ENCODE measurements at regions of chr11 and their contacts with region 1.

Region 1: GRCh38 chr11:119676461-119677020 is 52.5 kb downstream of the NECTIN1 start:
- DNase-seq: no peak
- ATAC-seq: no peak
- H3K4me3 ChIP-seq: no peak overlapping the region
- H3K27ac ChIP-seq: no peak overlapping the region
- H3K4me1 ChIP-seq: peaks cover under 1% of the 10 kb centered on the region; the same call in 1 of the 2 replicates
- H3K27me3 ChIP-seq: no peaks in the 10 kb centered on the region
- CTCF ChIP-seq: no peak
- EP300 ChIP-seq: no peak
- POLR2A ChIP-seq: no peak
- RAD21 ChIP-seq: no peak

Region 2: DNA sequence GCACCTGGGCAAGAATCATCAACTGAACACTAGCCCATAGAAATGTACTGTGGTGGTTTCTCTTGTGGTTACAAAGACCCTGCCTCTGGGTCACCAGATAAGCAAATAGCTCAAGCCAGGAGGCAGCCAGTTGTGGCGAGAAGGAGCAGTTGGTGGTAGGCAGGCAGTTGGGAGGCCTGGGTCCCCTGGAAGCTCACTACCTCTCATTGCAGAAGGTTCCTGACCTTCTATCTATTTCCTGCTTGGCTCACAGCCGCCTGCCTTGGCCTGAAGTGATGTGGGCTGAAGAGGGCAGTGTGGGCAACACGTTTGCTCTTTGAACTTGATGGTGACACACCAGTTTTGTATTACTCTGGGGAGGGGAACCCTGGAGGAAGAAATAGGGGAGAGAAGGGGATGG is 17.8 kb after region 1 on chr11:
- CTCF ChIA-PET with region 1: no interaction called
- POLR2A ChIA-PET with region 1: no interaction called
- in situ Hi-C with region 1: no loop called
- intact Hi-C with region 1: no loop called
- DNase-seq: peak; percentile 72
- ATAC-seq: peak; percentile 67
- H3K4me3 ChIP-seq: no peak overlapping the region
- H3K27ac ChIP-seq: no peak overlapping the region
- H3K4me1 ChIP-seq: peaks cover 67% of the 10 kb centered on the region
- H3K27me3 ChIP-seq: no peaks in the 10 kb centered on the region
- CTCF ChIP-seq: peak; percentile 82
- EP300 ChIP-seq: no peak
- POLR2A ChIP-seq: no peak
- RAD21 ChIP-seq: 0 out of 2 replicates have a peak, but pooled peaks have one; percentile 17

Region 3: DNA sequence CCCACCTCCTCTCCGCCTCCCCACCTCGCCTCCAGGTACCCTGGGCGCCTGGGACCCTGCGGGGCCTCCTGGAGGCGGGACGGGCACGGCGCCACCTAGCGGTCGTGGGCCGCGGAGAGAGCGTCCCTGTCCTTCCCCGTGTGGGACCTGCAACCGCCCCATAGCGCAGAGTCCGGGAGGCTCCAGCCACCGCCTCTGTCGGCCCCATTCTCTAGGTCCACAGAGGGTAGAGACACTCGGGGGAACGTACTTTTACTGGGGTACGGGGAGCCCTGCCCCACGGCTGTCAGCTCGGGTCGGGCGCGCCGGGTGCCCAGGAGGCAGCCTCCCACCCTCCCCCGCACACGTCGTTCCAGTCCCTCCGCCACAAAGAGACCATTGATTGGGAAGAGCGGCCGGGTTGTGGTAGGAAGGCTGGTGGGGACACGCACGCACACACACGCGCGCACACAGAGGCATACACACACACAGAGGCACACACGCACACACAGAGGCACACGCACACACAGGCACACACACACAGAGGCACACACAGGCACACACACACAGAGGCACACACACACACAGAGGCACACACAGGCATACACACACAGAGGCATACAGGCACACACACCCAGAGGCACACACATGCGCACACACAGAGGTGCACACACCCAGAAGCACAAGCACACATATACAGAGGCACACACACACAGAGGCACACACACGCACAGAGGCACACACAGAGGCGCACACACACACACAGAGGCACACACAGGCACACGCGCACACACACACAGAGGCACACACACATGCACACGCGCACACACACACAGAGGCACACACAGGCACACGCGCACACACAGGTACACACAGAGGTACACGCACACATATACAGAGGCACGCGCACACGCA is 65.1 kb after region 1 on chr11:
- CTCF ChIA-PET with region 1: no interaction called
- POLR2A ChIA-PET with region 1: no interaction called
- in situ Hi-C with region 1: loop called (anchors 5 kb)
- intact Hi-C with region 1: no loop called
- DNase-seq: peak; percentile 21
- ATAC-seq: peak; percentile 95
- H3K4me3 ChIP-seq: peak overlapping the region in 2 of 3 experiments; percentile 33 to 61; a peak in 4 of 6 replicates
- H3K27ac ChIP-seq: no peak overlapping the region
- H3K4me1 ChIP-seq: peaks cover 18% of the 10 kb centered on the region
- H3K27me3 ChIP-seq: peaks cover 10 to 73% of the 10 kb centered on the region in 2 experiments; a peak in 4 of 5 replicates
- CTCF ChIP-seq: peak; percentile 92
- EP300 ChIP-seq: no peak
- POLR2A ChIP-seq: no peak
- RAD21 ChIP-seq: peak; percentile 79

Measured in HepG2 (cell line).